Activated CD8-positive, alpha-beta T cell treated with anti-CD3 and anti-CD28 coated beads for 36 hours (primary cell): ENCODE measurements at regions of chr7 and their contacts with region 1.

Region 1: DNA sequence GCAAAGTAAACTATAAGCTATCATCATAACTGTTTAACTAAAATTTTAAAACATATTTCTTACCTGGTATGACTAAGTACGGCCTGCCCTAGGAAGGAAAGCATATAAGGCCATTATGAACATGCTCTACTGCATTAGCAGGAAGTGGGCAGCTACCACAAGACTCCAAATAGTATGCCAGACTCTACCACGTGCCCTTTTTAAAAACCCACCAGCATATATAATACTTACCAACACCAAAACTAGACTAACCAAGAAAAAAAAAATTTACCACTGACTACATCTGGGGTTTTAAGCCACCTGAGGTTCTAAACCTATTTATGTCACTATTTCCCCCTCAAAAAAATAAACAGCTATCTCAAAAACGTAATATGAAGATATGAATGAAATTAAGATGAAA is 30.1 kb downstream of the NUDCD3 start:
- DNase-seq: peak; percentile 85
- ATAC-seq: peak; percentile 83
- H3K4me3 Mint-ChIP-seq: peak overlapping the region; percentile 67
- H3K27ac Mint-ChIP-seq: peak overlapping the region; percentile 98
- H3K4me1 Mint-ChIP-seq: peaks cover 68% of the 10 kb centered on the region
- H3K27me3 Mint-ChIP-seq: no peaks in the 10 kb centered on the region
- CTCF ChIP-seq: no peak

Region 2: GRCh38 chr7:44431091-44431608 is 29.2 kb before region 1 on chr7:
- CTCF ChIA-PET with region 1: no interaction called
- POLR2A ChIA-PET with region 1: no interaction called
- intact Hi-C with region 1: loop called (anchors 5 kb)
- DNase-seq: peak; percentile 33
- ATAC-seq: peak; percentile 60
- H3K4me3 Mint-ChIP-seq: no peak overlapping the region
- H3K27ac Mint-ChIP-seq: no peak overlapping the region
- H3K4me1 Mint-ChIP-seq: peaks cover 39% of the 10 kb centered on the region
- H3K27me3 Mint-ChIP-seq: no peaks in the 10 kb centered on the region
- CTCF ChIP-seq: no peak

Region 3: GRCh38 chr7:44490351-44491200 is 30.3 kb after region 1 on chr7 and contains the start of gene NUDCD3:
- CTCF ChIA-PET with region 1: interaction called, 7 read pairs
- POLR2A ChIA-PET with region 1: interaction called, 24 read pairs
- intact Hi-C with region 1: no loop called
- DNase-seq: peak; percentile 86
- ATAC-seq: peak; percentile 78
- H3K4me3 Mint-ChIP-seq: peak within 1 kb of the TSS; percentile 92
- H3K27ac Mint-ChIP-seq: peak within 1 kb of the TSS; percentile 97
- H3K4me1 Mint-ChIP-seq: peaks cover 40% of the 10 kb centered on the region
- H3K27me3 Mint-ChIP-seq: peaks cover 2% of the 10 kb centered on the region
- CTCF ChIP-seq: no peak
- total RNA-seq, gene NUDCD3: 102 to 107 TPM

Region 4: GRCh38 chr7:44650772-44651171 is 190.4 kb after region 1 on chr7:
- CTCF ChIA-PET with region 1: no interaction called
- POLR2A ChIA-PET with region 1: no interaction called
- intact Hi-C with region 1: no loop called
- DNase-seq: no peak
- ATAC-seq: no peak
- H3K4me3 Mint-ChIP-seq: no peak overlapping the region
- H3K27ac Mint-ChIP-seq: no peak overlapping the region
- H3K4me1 Mint-ChIP-seq: peaks cover 2% of the 10 kb centered on the region
- H3K27me3 Mint-ChIP-seq: no peaks in the 10 kb centered on the region
- CTCF ChIP-seq: no peak